Activated CD4-positive, alpha-beta memory T cell treated with anti-CD3 and anti-CD28 coated beads for 36 hours (primary cell): ENCODE measurements at regions of chr3 and their contacts with region 1.

Region 1: DNA sequence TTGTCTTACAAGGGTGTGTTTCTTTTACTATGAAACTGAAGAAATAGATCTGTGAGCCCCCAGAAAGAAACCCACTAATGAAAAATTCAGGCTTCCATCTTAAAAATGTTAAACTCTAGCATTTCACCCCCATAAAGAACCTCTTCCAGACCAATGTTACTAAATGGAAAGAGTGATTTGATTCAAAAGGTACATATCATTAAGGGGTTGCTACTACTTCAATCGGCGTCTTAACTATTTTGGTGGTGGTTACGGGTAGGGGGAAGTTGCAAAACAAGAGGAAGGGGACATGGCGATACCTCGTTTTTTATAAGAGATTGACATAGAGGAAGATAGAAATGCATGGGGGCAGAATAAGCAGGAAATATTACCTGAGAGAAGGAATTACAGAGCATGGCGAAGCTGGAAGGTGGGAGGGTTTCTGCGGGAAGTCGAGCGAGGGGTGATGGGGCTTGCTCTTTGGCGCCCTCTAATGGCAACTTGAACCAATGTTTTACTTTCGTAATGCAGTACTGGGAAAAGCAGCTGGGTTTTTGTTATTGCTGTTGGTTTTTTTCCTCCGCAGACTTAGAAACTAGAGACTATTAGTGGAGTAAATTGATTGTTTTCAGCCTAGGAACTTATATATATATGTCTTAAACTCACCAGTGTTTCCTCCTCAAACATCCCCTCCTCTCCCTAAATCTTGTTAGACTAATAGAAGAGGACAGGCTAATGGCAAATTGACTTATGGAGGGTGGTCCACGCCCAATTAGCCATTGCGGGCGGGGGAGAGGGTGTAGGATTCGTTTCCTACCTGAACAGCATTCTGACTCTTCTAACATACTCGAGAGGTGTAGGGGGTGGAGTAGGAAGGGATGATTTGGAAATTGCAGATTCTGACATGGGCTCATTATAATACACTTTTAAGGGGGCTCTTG is 11.3 kb upstream of the SOX2 start:
- DNase-seq: peak; percentile 58
- H3K4me3 Mint-ChIP-seq: peak overlapping the region; percentile 21
- H3K27ac Mint-ChIP-seq: no peak overlapping the region
- H3K4me1 Mint-ChIP-seq: peaks cover 32% of the 10 kb centered on the region
- H3K27me3 Mint-ChIP-seq: peaks cover 82% of the 10 kb centered on the region

Region 2: GRCh38 chr3:180802837-180803236 is 897.6 kb before region 1 on chr3:
- CTCF ChIA-PET with region 1: no interaction called
- POLR2A ChIA-PET with region 1: no interaction called
- intact Hi-C with region 1: loop called (anchors 5 kb)
- DNase-seq: no peak
- H3K4me3 Mint-ChIP-seq: no peak overlapping the region
- H3K27ac Mint-ChIP-seq: no peak overlapping the region
- H3K4me1 Mint-ChIP-seq: no peaks in the 10 kb centered on the region
- H3K27me3 Mint-ChIP-seq: peaks cover 1% of the 10 kb centered on the region

Region 3: DNA sequence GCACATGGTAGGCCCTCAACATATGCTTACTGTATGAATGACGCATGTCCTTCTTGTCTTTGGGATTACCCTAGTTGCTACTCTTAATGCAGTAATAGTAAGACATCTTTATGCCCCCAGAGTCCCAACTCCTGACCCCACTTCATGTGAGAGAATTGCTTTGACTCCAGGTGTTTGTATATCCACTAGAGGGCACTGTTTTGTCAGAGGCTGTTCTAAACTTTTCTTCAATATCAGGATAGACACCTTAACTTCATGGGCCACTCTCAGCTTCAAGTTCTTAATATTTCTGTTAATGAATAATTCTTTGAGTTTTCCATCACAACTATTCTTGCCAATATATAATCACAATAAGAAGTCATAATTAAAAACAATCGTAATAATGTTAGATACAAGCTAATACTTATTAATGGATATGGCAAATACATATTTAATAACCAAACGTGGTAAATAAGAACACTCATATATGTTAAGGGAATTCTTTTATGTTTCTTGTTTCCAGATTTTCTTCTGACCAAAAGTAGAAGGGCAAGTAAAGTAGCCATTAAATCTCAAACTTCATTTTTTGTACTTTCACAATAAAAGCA is 373.7 kb before region 1 on chr3:
- CTCF ChIA-PET with region 1: interaction called, 4 read pairs
- POLR2A ChIA-PET with region 1: no interaction called
- intact Hi-C with region 1: loop called (anchors 2 kb)
- DNase-seq: no peak
- H3K4me3 Mint-ChIP-seq: no peak overlapping the region
- H3K27ac Mint-ChIP-seq: no peak overlapping the region
- H3K4me1 Mint-ChIP-seq: no peaks in the 10 kb centered on the region
- H3K27me3 Mint-ChIP-seq: no peaks in the 10 kb centered on the region

Region 4: DNA sequence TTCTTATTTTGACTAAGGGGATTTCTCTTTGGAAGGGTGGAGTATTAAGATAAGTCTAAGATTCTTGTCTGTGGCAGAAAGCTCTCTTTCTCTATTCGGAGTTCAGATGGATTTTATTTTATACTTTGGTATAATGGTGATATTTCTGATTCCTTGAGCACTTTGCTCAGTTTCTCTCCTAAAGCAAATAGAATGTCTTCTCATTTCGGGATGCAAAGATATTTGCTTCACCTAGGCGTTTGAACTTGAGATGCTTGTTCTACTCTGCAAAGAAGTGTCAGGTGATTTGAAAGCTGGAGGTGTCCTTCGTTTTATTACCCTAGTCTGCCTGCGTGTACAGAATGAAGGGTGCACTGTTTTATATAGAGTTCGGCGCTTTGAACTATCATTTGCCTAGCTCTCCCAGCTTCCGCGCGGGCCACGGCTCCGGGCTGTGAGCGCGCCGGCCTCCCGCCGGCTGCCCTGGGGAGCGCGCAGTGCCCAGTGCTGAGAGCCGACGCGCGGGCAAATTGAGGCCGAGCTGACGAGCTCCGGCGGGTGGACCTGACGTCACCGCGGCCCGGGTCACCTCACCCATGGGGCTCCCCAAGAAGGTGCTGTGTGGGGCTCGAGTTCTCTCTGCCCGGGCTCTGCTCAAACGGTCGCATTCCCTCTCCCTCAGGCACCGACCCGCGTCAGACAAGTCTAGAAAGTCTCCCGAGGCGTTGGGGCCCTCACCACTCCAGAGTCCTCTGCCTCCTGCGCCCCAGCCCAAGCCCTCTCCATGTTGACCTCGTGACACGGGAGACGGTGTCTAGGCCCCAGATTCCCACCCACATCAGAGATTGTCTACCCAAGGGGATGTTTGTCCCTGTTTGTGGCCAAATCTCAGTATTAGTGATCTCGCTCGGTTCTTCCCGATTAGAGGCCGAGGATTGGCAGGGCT is 18.8 kb after region 1 on chr3:
- CTCF ChIA-PET with region 1: interaction called, 12 read pairs
- POLR2A ChIA-PET with region 1: no interaction called
- intact Hi-C with region 1: loop called (anchors 2 kb)
- DNase-seq: no peak
- H3K4me3 Mint-ChIP-seq: no peak overlapping the region
- H3K27ac Mint-ChIP-seq: no peak overlapping the region
- H3K4me1 Mint-ChIP-seq: peaks cover 2% of the 10 kb centered on the region
- H3K27me3 Mint-ChIP-seq: peaks cover 87% of the 10 kb centered on the region

Region 5: GRCh38 chr3:182618085-182618732 is 917.8 kb after region 1 on chr3:
- CTCF ChIA-PET with region 1: no interaction called
- POLR2A ChIA-PET with region 1: no interaction called
- intact Hi-C with region 1: loop called (anchors 5 kb)
- DNase-seq: no peak
- H3K4me3 Mint-ChIP-seq: no peak overlapping the region
- H3K27ac Mint-ChIP-seq: no peak overlapping the region
- H3K4me1 Mint-ChIP-seq: no peaks in the 10 kb centered on the region
- H3K27me3 Mint-ChIP-seq: no peaks in the 10 kb centered on the region